Activated naive CD4-positive, alpha-beta T cell treated with anti-CD3 and anti-CD28 coated beads for 36 hours (primary cell): ENCODE measurements at regions of chr16 and their contacts with region 1.

Region 1: DNA sequence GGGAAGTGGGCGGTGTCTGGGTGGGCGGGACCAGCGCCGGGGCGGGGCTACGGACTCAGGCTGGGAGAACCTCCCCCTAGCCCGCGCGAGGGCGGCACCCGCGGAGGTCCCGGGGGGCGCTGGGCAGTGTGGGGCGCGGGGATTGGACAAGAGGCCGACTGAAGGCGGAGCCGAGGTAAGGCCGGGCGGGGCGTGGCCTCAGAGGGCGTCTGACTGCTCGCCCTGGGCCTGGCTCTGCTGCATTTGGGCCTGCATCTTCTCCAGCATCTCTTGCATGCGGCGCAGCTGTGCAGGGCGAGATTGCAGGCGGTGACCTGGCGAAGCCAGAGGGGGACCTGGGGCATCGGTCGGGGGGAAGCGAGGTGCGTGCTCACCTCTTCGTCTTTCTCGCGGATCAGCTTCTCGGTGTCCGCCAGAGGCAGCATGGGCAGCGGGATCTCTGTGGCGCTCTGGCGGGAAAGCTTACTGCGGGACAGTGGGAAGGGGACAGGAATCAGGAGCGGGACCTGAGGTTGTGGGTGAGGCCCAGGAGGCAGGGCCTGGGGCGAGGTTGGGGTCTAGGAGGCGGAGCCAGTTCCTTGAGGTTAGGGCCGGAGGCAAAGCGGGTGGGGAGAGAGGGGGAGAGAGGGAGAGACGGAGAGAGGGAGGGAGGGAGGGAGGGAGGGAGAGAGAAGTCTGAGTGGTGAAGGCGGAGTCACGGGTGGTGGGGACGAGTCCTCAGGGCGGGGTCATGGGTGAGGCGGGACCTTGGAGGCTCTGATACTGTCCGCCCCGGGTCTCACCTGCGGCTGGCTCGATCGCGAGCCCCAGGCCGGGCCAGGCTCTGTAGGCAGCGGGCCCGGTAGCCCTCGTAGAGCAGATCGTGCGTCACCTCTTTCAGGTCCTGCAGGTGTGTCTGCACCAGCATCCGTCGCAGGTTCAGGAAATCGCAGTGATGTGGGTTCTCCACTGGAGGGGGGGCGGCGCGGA is 3.8 kb downstream of the SEPTIN1 start:
- DNase-seq: peak; percentile 100
- H3K4me3 Mint-ChIP-seq: peak overlapping the region; percentile 99
- H3K27ac Mint-ChIP-seq: peak overlapping the region; percentile 99
- H3K4me1 Mint-ChIP-seq: peaks cover 43% of the 10 kb centered on the region
- H3K27me3 Mint-ChIP-seq: no peaks in the 10 kb centered on the region

Region 2: DNA sequence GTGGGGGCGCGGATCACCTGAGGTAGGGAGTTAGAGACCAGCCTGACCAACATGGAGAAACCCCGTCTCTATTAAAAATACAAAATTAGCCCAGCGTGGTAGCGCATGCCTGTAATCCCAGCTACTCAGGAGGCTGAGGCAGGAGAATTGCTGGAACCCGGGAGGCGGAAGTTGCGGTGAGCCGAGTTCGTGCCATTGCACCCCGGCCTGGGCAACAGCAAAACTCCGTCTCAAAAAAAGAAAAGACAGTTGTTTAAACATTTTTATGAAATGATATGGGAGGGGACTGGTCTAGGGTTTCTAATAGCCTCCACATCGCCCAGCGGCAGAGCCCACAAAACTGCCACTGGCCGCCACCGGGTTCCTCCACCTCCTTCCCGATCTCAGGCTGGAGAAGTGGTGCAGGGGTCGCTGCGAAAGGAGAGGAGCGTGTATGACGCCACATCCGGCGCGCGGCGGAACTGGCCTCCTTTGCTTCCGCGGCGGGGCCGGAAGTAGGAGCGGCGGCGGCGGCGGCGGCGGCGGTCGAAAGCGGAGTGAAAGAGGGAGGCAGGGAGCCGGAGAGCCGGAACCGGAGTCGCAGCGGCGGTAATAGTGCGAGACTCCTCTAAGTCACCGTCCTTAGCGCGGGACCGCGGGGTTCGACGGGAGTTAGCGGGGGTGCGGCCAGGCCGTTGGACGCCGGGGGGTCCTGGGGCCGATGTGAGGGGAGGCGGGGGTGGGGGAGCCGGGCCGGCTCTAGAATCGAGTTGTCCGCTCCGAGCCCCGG is 302.8 kb before region 1 on chr16 and contains the start of gene PPP4C:
- CTCF ChIA-PET with region 1: no interaction called
- intact Hi-C with region 1: no loop called
- DNase-seq: peak; percentile 93
- H3K4me3 Mint-ChIP-seq: peak within 1 kb of the TSS; percentile 92
- H3K27ac Mint-ChIP-seq: peak within 1 kb of the TSS; percentile 94
- H3K4me1 Mint-ChIP-seq: peaks cover 33% of the 10 kb centered on the region
- H3K27me3 Mint-ChIP-seq: no peaks in the 10 kb centered on the region
- total RNA-seq, gene PPP4C: 104 to 105 TPM

Region 3: DNA sequence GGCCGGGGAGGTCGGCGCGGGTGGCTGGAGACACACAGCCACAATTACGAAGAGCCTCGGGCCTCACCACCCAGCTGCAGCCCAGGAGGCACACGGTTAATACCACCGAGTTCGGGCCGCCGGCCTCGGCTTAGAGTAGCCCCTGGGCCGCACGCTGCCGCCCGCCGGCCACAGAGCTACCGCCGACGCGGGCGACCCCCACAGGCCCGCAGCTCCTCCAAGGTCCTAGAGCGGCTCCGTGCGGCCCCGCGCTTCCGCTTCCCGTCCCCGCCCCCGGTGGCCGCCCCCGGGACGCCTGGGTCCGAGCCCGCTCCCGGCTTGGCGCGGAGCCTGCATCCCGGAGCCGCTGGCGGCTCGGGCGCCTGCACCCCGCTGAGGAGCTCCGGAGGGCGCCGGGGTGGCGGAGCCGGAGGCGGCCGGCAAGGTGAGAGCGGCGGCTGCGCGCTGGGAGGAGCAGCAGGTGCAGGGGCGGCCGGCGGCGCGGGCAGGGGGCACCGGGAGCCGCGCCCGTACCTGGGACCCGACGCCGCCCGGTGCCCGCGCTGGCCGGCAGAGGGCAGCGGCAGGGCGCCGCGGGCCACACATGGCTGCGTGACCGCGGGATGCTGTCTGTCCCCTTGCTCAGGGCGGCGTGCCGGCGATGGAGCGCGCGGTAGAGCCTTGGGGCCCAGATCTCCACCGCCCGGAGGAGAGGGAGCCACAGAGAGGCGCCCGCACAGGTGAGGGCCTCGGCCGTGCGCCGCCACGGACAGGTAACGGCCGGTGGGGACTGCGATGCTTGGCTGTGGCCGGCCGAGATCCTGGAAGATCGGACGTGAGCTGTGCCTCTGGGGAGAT is 16.9 kb after region 1 on chr16 and contains the start of gene ZNF48:
- CTCF ChIA-PET with region 1: interaction called, 30 read pairs
- intact Hi-C with region 1: no loop called
- DNase-seq: peak; percentile 54
- H3K4me3 Mint-ChIP-seq: peak within 1 kb of the TSS; percentile 94
- H3K27ac Mint-ChIP-seq: peak within 1 kb of the TSS; percentile 79
- H3K4me1 Mint-ChIP-seq: peaks cover 32% of the 10 kb centered on the region
- H3K27me3 Mint-ChIP-seq: no peaks in the 10 kb centered on the region
- total RNA-seq, gene ZNF48: 5.3 to 6.0 TPM